A549 (cell line): ENCODE measurements at regions of chr16 and their contacts with region 1.

Region 1: GRCh38 chr16:4253394-4254150 is 11.7 kb upstream of the SRL start:
- DNase-seq: peak; percentile 95 to 100
- ATAC-seq: peak; percentile 95 to 96
- H3K4me3 ChIP-seq: peak overlapping the region; percentile 49
- H3K27ac ChIP-seq: peak overlapping the region; percentile 74 to 88
- H3K4me1 ChIP-seq: no peaks in the 10 kb centered on the region
- CTCF ChIP-seq: no peak
- EP300 ChIP-seq: no peak
- POLR2A ChIP-seq: peak; percentile 95
- RAD21 ChIP-seq: peak in 1 of 2 experiments; percentile 95; a peak in 4 of 5 replicates

Region 2: DNA sequence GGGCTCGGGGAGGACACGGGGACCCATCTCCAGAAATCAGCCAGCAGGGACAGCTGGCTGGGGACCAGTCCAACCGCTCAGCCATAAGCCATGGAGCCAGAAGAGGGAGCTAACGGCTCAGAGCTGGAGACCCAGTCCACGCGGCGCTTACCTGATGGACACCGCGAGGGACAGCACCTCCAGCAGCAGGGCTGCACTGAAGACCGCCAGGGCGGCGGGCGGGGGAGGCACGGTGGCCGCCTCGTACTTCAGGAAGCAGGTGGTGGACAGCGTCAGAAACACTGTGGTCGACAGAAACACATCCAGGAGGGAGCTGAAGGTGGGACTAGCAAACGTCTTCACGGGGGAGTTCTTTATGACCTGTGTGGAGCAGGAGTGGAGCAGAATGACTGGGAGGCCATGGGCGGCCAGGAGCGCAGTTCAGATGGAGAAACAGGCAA is 270.5 kb before region 1 on chr16:
- CTCF ChIA-PET with region 1: interaction called, 83 read pairs
- POLR2A ChIA-PET with region 1: interaction called, 16 read pairs
- DNase-seq: peak; percentile 81 to 93
- ATAC-seq: peak; percentile 96 to 98
- H3K4me3 ChIP-seq: no peak overlapping the region
- H3K27ac ChIP-seq: peak overlapping the region; percentile 46 to 75; a peak in 4 of 6 replicates
- H3K4me1 ChIP-seq: peaks cover 11% of the 10 kb centered on the region; the same call in 2 of the 3 replicates
- CTCF ChIP-seq: peak; percentile 91
- EP300 ChIP-seq: no peak
- POLR2A ChIP-seq: no peak
- RAD21 ChIP-seq: peak; percentile 96 to 97

Region 3: GRCh38 chr16:4194661-4195060 is 58.9 kb before region 1 on chr16:
- CTCF ChIA-PET with region 1: interaction called, 203 read pairs
- POLR2A ChIA-PET with region 1: interaction called, 8 read pairs
- DNase-seq: no peak
- ATAC-seq: no peak
- H3K4me3 ChIP-seq: no peak overlapping the region
- H3K27ac ChIP-seq: no peak overlapping the region
- H3K4me1 ChIP-seq: no peaks in the 10 kb centered on the region
- CTCF ChIP-seq: no peak
- EP300 ChIP-seq: no peak
- POLR2A ChIP-seq: no peak
- RAD21 ChIP-seq: no peak

Region 4: GRCh38 chr16:4232541-4233386 is 20.8 kb before region 1 on chr16:
- CTCF ChIA-PET with region 1: interaction called, 24 read pairs
- POLR2A ChIA-PET with region 1: no interaction called
- DNase-seq: no peak
- ATAC-seq: peak; percentile 28 to 60; a peak in 4 of 6 replicates
- H3K4me3 ChIP-seq: no peak overlapping the region
- H3K27ac ChIP-seq: no peak overlapping the region
- H3K4me1 ChIP-seq: no peaks in the 10 kb centered on the region
- CTCF ChIP-seq: no peak
- EP300 ChIP-seq: no peak
- POLR2A ChIP-seq: no peak
- RAD21 ChIP-seq: no peak

Region 5: DNA sequence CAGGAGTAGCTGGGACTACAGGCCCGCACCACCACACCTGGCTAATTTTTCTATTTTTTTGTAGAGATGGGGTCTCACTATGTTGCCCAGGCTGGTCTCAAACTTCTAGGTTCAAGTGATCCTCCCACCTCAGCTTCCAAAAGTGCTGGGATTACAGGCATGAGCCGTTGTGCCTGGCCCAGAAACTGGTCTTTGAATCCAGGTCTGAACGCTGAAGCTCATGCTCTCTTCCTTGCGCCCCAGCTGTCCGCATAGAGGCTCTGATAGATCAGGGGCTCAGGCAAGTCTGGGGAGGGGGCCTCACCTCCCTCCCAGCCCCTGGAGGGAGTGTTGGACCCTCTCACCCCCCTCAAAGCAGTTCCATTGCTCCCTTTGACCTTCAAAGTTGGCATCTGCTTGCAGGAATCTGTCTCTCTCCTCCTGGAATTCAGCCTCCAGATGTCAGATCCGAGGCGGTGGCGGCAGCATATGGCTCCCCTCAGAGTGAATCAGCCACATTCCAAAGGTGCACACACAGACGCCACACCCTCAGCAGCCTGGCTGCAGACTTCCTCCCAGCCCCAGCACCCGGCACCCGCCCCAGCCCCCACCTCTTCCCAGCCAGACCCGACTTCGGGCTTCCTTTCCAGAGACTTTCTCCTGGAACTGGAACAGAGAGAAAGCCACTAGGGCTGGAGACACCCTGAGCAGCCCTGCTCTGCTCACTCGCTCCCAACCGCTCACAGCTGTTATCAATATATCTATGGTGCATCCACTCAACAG is 45.4 kb after region 1 on chr16:
- CTCF ChIA-PET with region 1: interaction called, 17 read pairs
- POLR2A ChIA-PET with region 1: no interaction called
- DNase-seq: peak; percentile 95 to 97
- ATAC-seq: peak; percentile 96 to 99
- H3K4me3 ChIP-seq: peak overlapping the region; percentile 11; the same call in 1 of the 3 replicates
- H3K27ac ChIP-seq: peak overlapping the region; percentile 94 to 99
- H3K4me1 ChIP-seq: peaks cover 57% of the 10 kb centered on the region
- CTCF ChIP-seq: no peak
- EP300 ChIP-seq: peak in 1 of 2 experiments; percentile 49; a peak in 2 of 5 replicates
- POLR2A ChIP-seq: peak; percentile 26; the same call in 1 of the 2 replicates
- RAD21 ChIP-seq: peak; percentile 15 to 39; a peak in 2 of 5 replicates

Region 6: GRCh38 chr16:4371357-4372000 is 117.9 kb after region 1 on chr16 and contains the start of gene VASN:
- CTCF ChIA-PET with region 1: interaction called, 11 read pairs
- POLR2A ChIA-PET with region 1: no interaction called
- DNase-seq: peak; percentile 68 to 78
- ATAC-seq: peak; percentile 49 to 64
- H3K4me3 ChIP-seq: peak within 1 kb of the TSS; percentile 70
- H3K27ac ChIP-seq: peak within 1 kb of the TSS; percentile 74 to 94
- H3K4me1 ChIP-seq: peaks cover 61% of the 10 kb centered on the region
- CTCF ChIP-seq: no peak
- EP300 ChIP-seq: no peak
- POLR2A ChIP-seq: peak; percentile 98
- RAD21 ChIP-seq: no peak
- polyA plus RNA-seq, gene VASN: 2.0 and 2.3 TPM in 2 replicates

Region 7: GRCh38 chr16:6081320-6081976 is 1827.9 kb after region 1 on chr16:
- CTCF ChIA-PET with region 1: no interaction called
- POLR2A ChIA-PET with region 1: no interaction called
- DNase-seq: peak; percentile 7 to 27
- ATAC-seq: peak in 1 of 2 experiments; percentile 47; a peak in 1 of 6 replicates
- H3K4me3 ChIP-seq: no peak overlapping the region
- H3K27ac ChIP-seq: no peak overlapping the region
- H3K4me1 ChIP-seq: no peaks in the 10 kb centered on the region
- CTCF ChIP-seq: no peak
- EP300 ChIP-seq: no peak
- POLR2A ChIP-seq: no peak
- RAD21 ChIP-seq: peak in 1 of 2 experiments; percentile 56; a peak in 3 of 5 replicates